T-cell (primary cell): ENCODE measurements at regions of chr6 and their contacts with region 1.

Region 1: GRCh38 chr6:10256113-10256690 is 158.7 kb downstream of the TFAP2A start:
- DNase-seq: no peak
- ATAC-seq: no peak
- H3K4me3 ChIP-seq: no peak overlapping the region
- H3K4me3 Mint-ChIP-seq: no peak overlapping the region
- H3K27ac ChIP-seq: no peak overlapping the region
- H3K27ac Mint-ChIP-seq: no peak overlapping the region
- H3K4me1 ChIP-seq: no peaks in the 10 kb centered on the region
- H3K4me1 Mint-ChIP-seq: no peaks in the 10 kb centered on the region
- H3K27me3 ChIP-seq: no peaks in the 10 kb centered on the region
- H3K27me3 Mint-ChIP-seq: peaks cover 2 to 4% of the 10 kb centered on the region in 2 donors

Region 2: GRCh38 chr6:8322659-8323058 is 1933.5 kb before region 1 on chr6:
- CTCF ChIA-PET with region 1: interaction called in 1 of 2 experiments, 11 read pairs
- POLR2A ChIA-PET with region 1: no interaction called
- DNase-seq: no peak
- ATAC-seq: no peak
- H3K4me3 ChIP-seq: no peak overlapping the region
- H3K4me3 Mint-ChIP-seq: no peak overlapping the region
- H3K27ac ChIP-seq: no peak overlapping the region
- H3K27ac Mint-ChIP-seq: no peak overlapping the region
- H3K4me1 ChIP-seq: no peaks in the 10 kb centered on the region
- H3K4me1 Mint-ChIP-seq: no peaks in the 10 kb centered on the region
- H3K27me3 ChIP-seq: peaks cover 0 to 3% of the 10 kb centered on the region in 2 experiments
- H3K27me3 Mint-ChIP-seq: peaks cover 3 to 4% of the 10 kb centered on the region in 2 donors